ENCODE measurements at regions of chr9 and their contacts with region 1.

Region 1: GRCh38 chr9:123710299-123710698 is 219.6 kb downstream of the DENND1A start:
- DNase-seq: no peak
- ATAC-seq: no peak
- H3K4me3 Mint-ChIP-seq: no peak overlapping the region
- H3K27ac Mint-ChIP-seq: no peak overlapping the region
- H3K4me1 Mint-ChIP-seq: no peaks in the 10 kb centered on the region
- H3K27me3 Mint-ChIP-seq: no peaks in the 10 kb centered on the region
- CTCF ChIP-seq: no peak

Region 2: GRCh38 chr9:123544007-123544827 is 166.1 kb before region 1 on chr9:
- CTCF ChIA-PET with region 1: no interaction called
- POLR2A ChIA-PET with region 1: no interaction called
- intact Hi-C with region 1: no loop called
- DNase-seq: no peak
- ATAC-seq: no peak
- H3K4me3 Mint-ChIP-seq: no peak overlapping the region
- H3K27ac Mint-ChIP-seq: no peak overlapping the region
- H3K4me1 Mint-ChIP-seq: no peaks in the 10 kb centered on the region
- H3K27me3 Mint-ChIP-seq: no peaks in the 10 kb centered on the region
- CTCF ChIP-seq: peak; percentile 70

Region 3: DNA sequence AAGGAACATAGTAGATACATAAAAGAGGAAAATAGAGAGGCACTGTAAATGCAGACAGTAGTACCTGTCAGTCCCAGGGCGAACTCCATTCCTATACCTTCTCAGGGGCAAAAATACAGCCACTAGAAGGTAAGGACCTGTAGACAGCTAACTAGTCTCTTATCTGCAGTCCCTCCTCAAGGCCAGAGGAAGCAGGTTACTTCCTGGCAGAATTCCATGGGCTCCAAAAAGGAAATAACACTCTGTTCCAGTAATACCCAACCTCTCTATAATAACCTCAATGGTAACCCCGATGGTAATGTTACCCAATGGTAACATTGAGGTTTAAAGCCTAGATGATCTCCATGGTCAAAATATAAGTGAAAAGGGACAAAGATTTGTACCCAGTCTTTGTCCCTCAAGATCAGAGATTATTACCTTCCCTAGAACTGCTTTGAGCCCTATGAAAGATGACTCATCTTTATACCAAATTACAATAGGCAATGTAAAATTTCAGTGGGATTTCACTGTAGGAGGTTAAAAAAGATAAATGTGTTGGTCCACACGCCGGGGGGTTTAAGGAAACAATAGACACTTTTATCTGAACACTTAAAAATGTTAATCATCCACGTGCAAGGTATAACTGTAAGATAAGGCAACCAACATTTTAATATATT is 106.6 kb after region 1 on chr9:
- CTCF ChIA-PET with region 1: no interaction called
- POLR2A ChIA-PET with region 1: no interaction called
- intact Hi-C with region 1: loop called (anchors 10 kb)
- DNase-seq: no peak
- ATAC-seq: no peak
- H3K4me3 Mint-ChIP-seq: no peak overlapping the region
- H3K27ac Mint-ChIP-seq: no peak overlapping the region
- H3K4me1 Mint-ChIP-seq: peaks cover 7% of the 10 kb centered on the region
- H3K27me3 Mint-ChIP-seq: no peaks in the 10 kb centered on the region
- CTCF ChIP-seq: no peak